Activated CD8-positive, alpha-beta T cell treated with anti-CD3 and anti-CD28 coated beads for 36 hours (primary cell): ENCODE measurements at regions of chr13 and their contacts with region 1.

Region 1: DNA sequence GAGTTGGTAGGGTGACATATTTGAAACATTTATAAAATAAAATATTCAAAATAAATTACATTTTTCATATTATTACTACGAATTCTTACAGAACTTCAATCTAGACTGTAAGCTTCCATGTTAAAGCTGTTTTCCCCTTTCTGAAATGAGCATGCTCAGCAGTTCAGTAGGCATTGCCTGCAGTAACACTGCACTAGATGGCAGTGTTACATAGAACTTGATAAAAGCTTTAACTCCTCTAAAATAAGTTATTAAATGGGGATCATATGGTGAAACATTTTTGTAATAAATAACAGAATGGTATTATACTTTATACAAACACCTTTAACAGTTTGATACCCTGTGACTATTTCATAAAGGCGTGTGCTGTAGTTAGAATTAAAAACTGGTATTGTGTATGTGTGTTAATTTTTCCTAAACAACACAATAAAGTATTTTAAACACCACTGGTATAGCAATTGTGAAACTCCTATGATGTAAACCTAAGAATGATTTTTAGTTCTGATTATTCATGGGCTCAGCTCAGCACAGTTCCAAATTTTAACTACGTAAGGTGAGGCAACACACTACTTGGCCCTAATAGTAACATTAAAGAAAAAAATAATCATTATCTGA is 11.6 kb upstream of the GPR18 start:
- DNase-seq: peak; percentile 38
- ATAC-seq: peak; percentile 60
- H3K4me3 Mint-ChIP-seq: no peak overlapping the region
- H3K27ac Mint-ChIP-seq: peak overlapping the region; percentile 69
- H3K4me1 Mint-ChIP-seq: peaks cover 65% of the 10 kb centered on the region
- H3K27me3 Mint-ChIP-seq: no peaks in the 10 kb centered on the region
- CTCF ChIP-seq: peak; percentile 85

Region 2: GRCh38 chr13:98327371-98328270 is 942.1 kb before region 1 on chr13:
- CTCF ChIA-PET with region 1: no interaction called
- POLR2A ChIA-PET with region 1: no interaction called
- intact Hi-C with region 1: no loop called
- DNase-seq: no peak
- ATAC-seq: no peak
- H3K4me3 Mint-ChIP-seq: no peak overlapping the region
- H3K27ac Mint-ChIP-seq: no peak overlapping the region
- H3K4me1 Mint-ChIP-seq: no peaks in the 10 kb centered on the region
- H3K27me3 Mint-ChIP-seq: peaks cover 2% of the 10 kb centered on the region
- CTCF ChIP-seq: no peak

Region 3: GRCh38 chr13:99176309-99177276 is 93.1 kb before region 1 on chr13:
- CTCF ChIA-PET with region 1: interaction called, 264 read pairs
- POLR2A ChIA-PET with region 1: interaction called, 7 read pairs
- intact Hi-C with region 1: loop called (anchors 2 kb)
- DNase-seq: peak; percentile 87
- ATAC-seq: peak; percentile 91
- H3K4me3 Mint-ChIP-seq: peak overlapping the region; percentile 61
- H3K27ac Mint-ChIP-seq: peak overlapping the region; percentile 83
- H3K4me1 Mint-ChIP-seq: peaks cover 38% of the 10 kb centered on the region
- H3K27me3 Mint-ChIP-seq: no peaks in the 10 kb centered on the region
- CTCF ChIP-seq: peak; percentile 95

Region 4: DNA sequence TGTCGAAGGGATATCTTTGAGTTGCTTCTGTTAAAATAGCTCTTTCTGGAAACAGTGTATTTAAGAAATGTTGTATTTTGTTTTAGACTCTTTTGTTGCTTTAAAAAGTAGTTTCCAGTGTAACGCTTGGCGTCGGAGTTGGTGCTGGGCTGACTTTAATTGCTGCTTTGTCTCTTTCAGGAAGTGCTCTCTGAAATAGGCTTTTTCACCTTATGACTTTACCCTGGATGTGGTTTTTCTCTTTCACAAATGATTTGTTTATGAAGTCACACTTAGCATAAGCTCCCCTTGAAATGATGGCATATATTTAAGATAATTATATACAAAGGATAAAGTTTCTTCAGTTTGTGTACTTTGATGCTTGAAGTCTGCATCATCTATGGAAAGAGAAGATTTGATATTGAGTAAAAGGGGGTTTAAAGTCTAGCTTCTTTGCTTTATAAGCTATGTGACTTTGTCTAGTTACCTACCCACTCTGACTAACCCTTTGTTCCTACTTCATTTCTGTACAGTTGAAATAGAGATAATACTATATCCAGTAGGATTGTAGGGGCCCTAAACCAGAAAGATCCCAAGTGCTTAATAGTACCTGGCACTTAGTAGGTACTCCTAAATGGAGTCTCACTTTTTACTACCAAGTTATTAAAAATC is 11.4 kb before region 1 on chr13 and contains the start of gene GPR18:
- CTCF ChIA-PET with region 1: interaction called, 12 read pairs
- POLR2A ChIA-PET with region 1: interaction called, 5 read pairs
- intact Hi-C with region 1: no loop called
- DNase-seq: peak; percentile 66
- ATAC-seq: peak; percentile 74
- H3K4me3 Mint-ChIP-seq: peak within 1 kb of the TSS; percentile 84
- H3K27ac Mint-ChIP-seq: peak within 1 kb of the TSS; percentile 98
- H3K4me1 Mint-ChIP-seq: peaks cover 66% of the 10 kb centered on the region
- H3K27me3 Mint-ChIP-seq: no peaks in the 10 kb centered on the region
- CTCF ChIP-seq: no peak
- total RNA-seq, gene GPR18: 11.4 to 11.6 TPM

Region 5: DNA sequence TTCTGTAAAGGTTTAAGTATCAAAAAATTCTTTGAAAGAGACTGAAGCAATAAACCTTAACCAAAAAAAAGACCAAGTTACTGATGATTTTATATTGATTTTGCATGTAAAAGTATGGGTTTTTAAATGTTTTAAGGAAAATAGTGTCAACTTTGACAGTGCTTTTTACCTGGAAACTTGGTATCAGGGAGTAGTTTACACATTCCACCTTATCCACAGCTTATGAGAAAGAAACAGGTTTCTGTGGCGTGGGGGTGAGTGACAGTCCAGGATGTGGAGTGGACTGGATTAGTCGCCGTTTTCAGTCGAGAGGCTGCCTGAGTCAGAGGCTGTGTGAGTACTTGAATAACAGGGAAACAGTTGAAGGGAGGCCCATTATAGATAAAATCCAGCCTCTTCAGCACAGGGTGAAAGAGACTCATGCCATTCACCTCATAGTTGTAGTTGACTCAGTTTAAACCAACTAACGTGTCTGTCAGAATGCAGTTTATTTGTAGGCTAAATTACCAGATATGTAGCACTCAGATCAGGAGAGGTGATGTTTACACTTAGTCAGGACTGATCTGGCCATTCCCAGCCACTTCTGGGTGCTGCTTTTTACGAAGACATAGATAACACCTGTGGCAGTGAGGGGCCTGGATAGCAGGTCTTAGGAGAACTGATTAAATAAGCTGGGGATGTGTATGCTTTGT is 38.1 kb after region 1 on chr13:
- CTCF ChIA-PET with region 1: interaction called, 29 read pairs
- POLR2A ChIA-PET with region 1: interaction called, 3 read pairs
- intact Hi-C with region 1: no loop called
- DNase-seq: peak; percentile 86
- ATAC-seq: peak; percentile 86
- H3K4me3 Mint-ChIP-seq: peak overlapping the region; percentile 76
- H3K27ac Mint-ChIP-seq: peak overlapping the region; percentile 93
- H3K4me1 Mint-ChIP-seq: peaks cover 85% of the 10 kb centered on the region
- H3K27me3 Mint-ChIP-seq: no peaks in the 10 kb centered on the region
- CTCF ChIP-seq: no peak

Region 6: GRCh38 chr13:99356158-99357091 is 86.7 kb after region 1 on chr13:
- CTCF ChIA-PET with region 1: interaction called, 27 read pairs
- POLR2A ChIA-PET with region 1: interaction called, 3 read pairs
- intact Hi-C with region 1: loop called (anchors 5 kb)
- DNase-seq: peak; percentile 71
- ATAC-seq: peak; percentile 53
- H3K4me3 Mint-ChIP-seq: peak overlapping the region; percentile 56
- H3K27ac Mint-ChIP-seq: peak overlapping the region; percentile 93
- H3K4me1 Mint-ChIP-seq: peaks cover 97% of the 10 kb centered on the region
- H3K27me3 Mint-ChIP-seq: no peaks in the 10 kb centered on the region
- CTCF ChIP-seq: no peak

Region 7: GRCh38 chr13:99386911-99387788 is 117.4 kb after region 1 on chr13:
- CTCF ChIA-PET with region 1: interaction called, 280 read pairs
- POLR2A ChIA-PET with region 1: interaction called, 3 read pairs
- intact Hi-C with region 1: no loop called
- DNase-seq: peak; percentile 92
- ATAC-seq: peak; percentile 50
- H3K4me3 Mint-ChIP-seq: no peak overlapping the region
- H3K27ac Mint-ChIP-seq: peak overlapping the region; percentile 84
- H3K4me1 Mint-ChIP-seq: peaks cover 66% of the 10 kb centered on the region
- H3K27me3 Mint-ChIP-seq: no peaks in the 10 kb centered on the region
- CTCF ChIP-seq: peak; percentile 99

Region 8: GRCh38 chr13:99566125-99567083 is 296.7 kb after region 1 on chr13:
- CTCF ChIA-PET with region 1: no interaction called
- POLR2A ChIA-PET with region 1: no interaction called
- intact Hi-C with region 1: no loop called
- DNase-seq: no peak
- ATAC-seq: no peak
- H3K4me3 Mint-ChIP-seq: peak overlapping the region; percentile 39
- H3K27ac Mint-ChIP-seq: peak overlapping the region; percentile 32
- H3K4me1 Mint-ChIP-seq: no peaks in the 10 kb centered on the region
- H3K27me3 Mint-ChIP-seq: no peaks in the 10 kb centered on the region
- CTCF ChIP-seq: no peak